A673 (cell line): ENCODE measurements at regions of chr18 and their contacts with region 1.

Region 1: GRCh38 chr18:39105104-39105503 is 1539.5 kb upstream of the CELF4 start:
- DNase-seq: no peak
- H3K4me3 ChIP-seq: no peak overlapping the region
- H3K27ac ChIP-seq: no peak overlapping the region
- H3K4me1 ChIP-seq: no peaks in the 10 kb centered on the region
- H3K27me3 ChIP-seq: no peaks in the 10 kb centered on the region
- CTCF ChIP-seq: no peak

Region 2: GRCh38 chr18:38895560-38895959 is 209.5 kb before region 1 on chr18:
- CTCF ChIA-PET with region 1: no interaction called
- POLR2A ChIA-PET with region 1: no interaction called
- intact Hi-C with region 1: no loop called
- DNase-seq: no peak
- H3K4me3 ChIP-seq: no peak overlapping the region
- H3K27ac ChIP-seq: no peak overlapping the region
- H3K4me1 ChIP-seq: no peaks in the 10 kb centered on the region
- H3K27me3 ChIP-seq: no peaks in the 10 kb centered on the region
- CTCF ChIP-seq: no peak

Region 3: DNA sequence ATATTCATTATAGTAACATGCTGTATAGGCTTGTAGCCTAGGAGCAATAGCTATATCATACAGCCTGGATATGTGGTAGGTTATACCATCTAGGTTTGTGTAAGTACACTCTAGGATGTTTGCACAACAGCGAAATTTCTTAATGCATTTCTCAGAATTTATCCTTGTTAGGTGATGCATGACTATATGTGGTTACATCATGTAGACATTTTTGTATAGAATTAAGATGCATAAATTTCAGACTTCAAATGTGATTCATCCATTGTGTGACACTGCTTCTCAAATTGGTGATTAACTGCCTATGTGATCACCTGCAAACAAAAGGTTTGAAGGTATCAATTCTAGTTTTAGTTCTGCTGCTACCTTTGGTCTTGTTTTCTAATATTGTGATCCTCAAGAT is 1062.9 kb after region 1 on chr18:
- CTCF ChIA-PET with region 1: no interaction called
- POLR2A ChIA-PET with region 1: no interaction called
- intact Hi-C with region 1: loop called (anchors 5 kb)
- DNase-seq: no peak
- H3K4me3 ChIP-seq: no peak overlapping the region
- H3K27ac ChIP-seq: no peak overlapping the region
- H3K4me1 ChIP-seq: no peaks in the 10 kb centered on the region
- H3K27me3 ChIP-seq: peaks cover under 1% of the 10 kb centered on the region
- CTCF ChIP-seq: no peak